ENCODE measurements at regions of chr9 and their contacts with region 1.

Region 1: DNA sequence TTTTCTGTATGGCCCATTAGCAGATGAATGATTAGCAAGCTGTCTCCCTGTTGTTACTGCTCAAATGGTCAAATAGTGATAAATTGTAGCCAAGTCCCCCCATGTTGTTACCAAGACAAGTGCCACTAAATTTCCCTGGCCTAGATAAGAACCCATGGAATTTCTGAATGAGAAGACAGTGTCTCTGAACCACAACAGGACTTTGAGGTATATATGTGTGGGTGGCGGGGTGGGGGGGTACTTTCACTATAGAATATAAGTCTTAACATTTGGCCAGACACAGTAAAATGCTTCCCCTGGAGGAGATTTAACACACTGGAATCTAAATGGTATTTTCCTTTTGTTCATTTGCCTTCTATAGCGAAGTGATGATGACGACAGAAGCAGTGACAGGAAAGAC is 28.7 kb downstream of the XPA start:
- DNase-seq: peak; percentile 32
- ATAC-seq: no peak
- H3K4me3 Mint-ChIP-seq: no peak overlapping the region
- H3K27ac Mint-ChIP-seq: peak overlapping the region; percentile 81
- H3K4me1 Mint-ChIP-seq: peaks cover 39% of the 10 kb centered on the region
- H3K27me3 Mint-ChIP-seq: no peaks in the 10 kb centered on the region

Region 2: GRCh38 chr9:97651646-97652045 is 16.8 kb before region 1 on chr9:
- CTCF ChIA-PET with region 1: no interaction called
- POLR2A ChIA-PET with region 1: interaction called, 4 read pairs
- intact Hi-C with region 1: loop called in 1 of 2 experiments (anchors 2 kb)
- DNase-seq: no peak
- ATAC-seq: peak; percentile 53
- H3K4me3 Mint-ChIP-seq: no peak overlapping the region
- H3K27ac Mint-ChIP-seq: peak overlapping the region; percentile 55
- H3K4me1 Mint-ChIP-seq: no peaks in the 10 kb centered on the region
- H3K27me3 Mint-ChIP-seq: no peaks in the 10 kb centered on the region